Activated T-helper 1 cell treated with anti-CD3 and anti-CD28 coated beads, Interleukin-12 subunit alpha, Interleukin-12 subunit beta, Interleukin-2, Interleukin-4 antibody, amounts not matched to agents 30 ng/mL and 10 ng/mL and 1 ng/mL, durations not matched to agents 14 hours and 24 hours and 36 hours (primary cell): ENCODE measurements at regions of chr18 and their contacts with region 1.

Region 1: GRCh38 chr18:35407871-35408481 is 30.8 kb upstream of the ZNF396 start:
- DNase-seq: peak; percentile 25
- H3K4me3 Mint-ChIP-seq: no peak overlapping the region
- H3K27ac Mint-ChIP-seq: no peak overlapping the region
- H3K4me1 Mint-ChIP-seq: peaks cover 19% of the 10 kb centered on the region
- H3K27me3 Mint-ChIP-seq: peaks cover 5% of the 10 kb centered on the region

Region 2: DNA sequence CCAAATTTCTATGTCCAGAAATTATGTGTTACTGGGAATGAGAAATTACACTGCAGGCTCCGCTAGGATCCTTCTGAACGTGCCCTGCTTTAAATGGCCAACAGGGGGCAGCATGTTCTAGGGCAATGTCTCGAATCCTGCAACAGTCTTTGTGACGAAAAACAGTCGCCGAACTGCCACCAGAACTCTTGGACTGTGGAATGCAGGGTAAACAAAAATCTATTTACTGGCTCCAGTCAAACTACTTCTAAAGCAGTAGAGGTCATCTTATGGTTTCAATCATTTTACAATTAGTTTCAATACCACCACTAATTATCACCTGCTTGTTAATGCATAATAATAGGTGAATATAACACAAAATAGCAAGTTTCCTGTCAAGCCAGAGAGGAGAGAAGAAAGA is 176.9 kb before region 1 on chr18:
- intact Hi-C with region 1: loop called (anchors 1 kb)
- DNase-seq: peak; percentile 65
- H3K4me3 Mint-ChIP-seq: peak overlapping the region; percentile 44
- H3K27ac Mint-ChIP-seq: peak overlapping the region; percentile 0
- H3K4me1 Mint-ChIP-seq: peaks cover 4% of the 10 kb centered on the region
- H3K27me3 Mint-ChIP-seq: no peaks in the 10 kb centered on the region

Region 3: DNA sequence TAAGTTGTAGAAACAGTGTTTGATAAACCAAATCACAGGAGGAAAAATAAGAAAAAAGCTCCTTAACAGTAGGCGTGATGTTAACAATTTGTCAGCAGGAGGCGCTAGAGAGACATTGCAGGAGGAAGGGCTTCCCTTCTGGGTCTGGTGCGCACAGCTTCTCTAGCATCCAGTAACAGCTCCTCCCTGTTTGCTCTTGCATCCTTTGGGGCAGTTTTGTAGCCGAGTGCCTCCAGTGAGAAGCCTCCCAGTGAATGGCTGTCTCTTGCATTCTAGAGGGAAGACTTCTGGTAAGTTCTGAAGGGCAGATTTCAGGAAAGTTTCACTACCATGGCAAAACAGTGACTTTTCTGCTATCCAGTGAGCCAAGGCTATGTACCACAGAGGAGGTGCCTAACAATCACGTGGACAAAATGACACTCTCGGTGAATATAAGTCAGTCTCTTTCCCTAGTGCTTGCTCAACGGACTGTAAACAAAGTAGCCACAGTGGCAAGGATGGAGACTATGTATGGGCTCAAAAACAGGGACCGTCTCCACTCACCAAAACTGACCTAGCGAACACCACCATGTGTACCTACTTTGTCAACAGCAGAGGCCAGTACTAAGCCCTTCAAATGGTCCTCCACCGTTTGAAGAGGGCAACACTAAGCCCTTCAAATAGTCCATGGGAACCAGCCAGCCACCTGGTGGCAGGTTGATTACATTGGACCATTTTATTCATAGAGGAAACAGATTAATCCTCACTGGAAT is 21.2 kb before region 1 on chr18:
- intact Hi-C with region 1: loop called (anchors 2 kb)
- DNase-seq: peak; percentile 56
- H3K4me3 Mint-ChIP-seq: no peak overlapping the region
- H3K27ac Mint-ChIP-seq: no peak overlapping the region
- H3K4me1 Mint-ChIP-seq: peaks cover 9% of the 10 kb centered on the region
- H3K27me3 Mint-ChIP-seq: peaks cover 21% of the 10 kb centered on the region

Region 4: DNA sequence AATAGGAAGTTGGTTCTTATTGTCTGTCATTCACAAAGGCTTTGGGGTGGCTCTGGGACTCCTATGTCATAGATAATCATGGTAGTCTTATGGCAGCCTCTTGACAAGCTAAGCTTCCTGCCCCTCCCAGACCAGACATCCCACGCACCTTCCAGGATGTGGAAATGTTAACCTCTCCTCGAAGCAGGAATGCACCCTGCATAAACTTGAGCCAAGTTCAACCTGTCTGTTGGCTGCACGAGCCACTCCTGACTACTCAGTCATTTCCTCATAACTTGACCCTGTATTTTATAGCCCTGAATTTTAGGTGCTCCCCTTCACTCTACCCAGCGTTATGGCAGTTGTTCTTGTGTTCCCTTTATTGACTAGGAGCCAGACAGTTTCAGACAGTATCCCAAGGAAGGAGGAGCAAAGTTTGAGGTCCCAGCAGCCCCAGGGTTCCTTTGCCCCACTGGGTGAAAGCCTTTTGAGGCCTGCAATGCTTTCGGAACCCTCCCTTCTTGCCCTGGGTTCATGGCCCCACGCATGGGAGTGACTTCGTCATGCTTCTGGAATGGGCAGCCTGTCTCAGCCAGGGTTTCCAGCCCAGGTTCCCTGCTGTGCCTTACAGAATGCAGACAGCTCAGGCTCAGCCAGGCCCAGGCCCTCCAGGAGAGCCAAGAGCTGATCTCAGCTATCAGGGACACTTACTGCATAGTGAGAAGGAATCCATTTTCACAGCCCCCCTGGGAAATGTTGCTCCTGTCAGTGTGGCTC is 105.4 kb after region 1 on chr18:
- intact Hi-C with region 1: loop called (anchors 5 kb)
- DNase-seq: no peak
- H3K4me3 Mint-ChIP-seq: no peak overlapping the region
- H3K27ac Mint-ChIP-seq: no peak overlapping the region
- H3K4me1 Mint-ChIP-seq: no peaks in the 10 kb centered on the region
- H3K27me3 Mint-ChIP-seq: no peaks in the 10 kb centered on the region

Region 5: GRCh38 chr18:35580701-35581539 is 172.9 kb after region 1 on chr18:
- intact Hi-C with region 1: loop called (anchors 1 kb)
- DNase-seq: peak; percentile 44
- H3K4me3 Mint-ChIP-seq: peak overlapping the region; percentile 76
- H3K27ac Mint-ChIP-seq: no peak overlapping the region
- H3K4me1 Mint-ChIP-seq: peaks cover 33% of the 10 kb centered on the region
- H3K27me3 Mint-ChIP-seq: peaks cover 3% of the 10 kb centered on the region

Region 6: DNA sequence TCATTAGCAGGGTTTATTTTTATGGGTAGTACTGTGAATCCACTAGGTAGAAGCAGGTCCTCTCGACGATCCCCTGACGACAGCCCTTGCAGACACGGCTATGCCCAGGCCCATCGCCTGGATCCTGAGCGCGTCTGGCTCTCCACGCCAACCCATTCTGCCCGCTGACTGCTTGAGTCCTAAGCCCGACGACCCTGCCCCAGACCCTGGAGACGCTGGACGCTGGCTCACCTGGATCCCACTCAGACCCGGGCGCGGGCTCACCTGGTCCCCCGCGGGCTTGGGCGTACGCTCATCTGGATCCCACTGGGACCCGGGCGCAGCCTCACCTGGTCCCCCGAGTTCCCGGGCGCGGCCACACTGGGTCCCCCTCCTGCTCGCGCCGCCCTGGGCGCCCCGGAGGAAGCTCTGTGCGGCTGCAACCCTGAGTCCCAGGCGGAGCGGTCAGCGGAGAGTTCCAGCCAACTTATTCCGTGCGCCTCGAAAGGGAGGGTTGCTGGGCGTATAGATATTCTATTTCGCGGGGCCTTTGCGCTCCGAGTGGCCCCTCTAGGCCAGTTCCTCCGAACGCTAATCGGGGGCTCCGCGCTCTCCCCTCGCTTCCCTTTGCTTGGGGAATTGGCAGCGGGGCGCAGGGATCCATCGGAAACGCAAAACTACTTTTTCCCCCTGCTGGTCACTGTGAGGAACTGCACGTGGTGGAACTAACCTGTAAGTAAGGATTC is 542.1 kb after region 1 on chr18:
- intact Hi-C with region 1: loop called (anchors 1 kb)
- DNase-seq: peak; percentile 42
- H3K4me3 Mint-ChIP-seq: peak overlapping the region; percentile 83
- H3K27ac Mint-ChIP-seq: no peak overlapping the region
- H3K4me1 Mint-ChIP-seq: peaks cover 11% of the 10 kb centered on the region
- H3K27me3 Mint-ChIP-seq: peaks cover 14% of the 10 kb centered on the region